ENCODE measurements at regions of chr2 and their contacts with region 1.

Region 1: DNA sequence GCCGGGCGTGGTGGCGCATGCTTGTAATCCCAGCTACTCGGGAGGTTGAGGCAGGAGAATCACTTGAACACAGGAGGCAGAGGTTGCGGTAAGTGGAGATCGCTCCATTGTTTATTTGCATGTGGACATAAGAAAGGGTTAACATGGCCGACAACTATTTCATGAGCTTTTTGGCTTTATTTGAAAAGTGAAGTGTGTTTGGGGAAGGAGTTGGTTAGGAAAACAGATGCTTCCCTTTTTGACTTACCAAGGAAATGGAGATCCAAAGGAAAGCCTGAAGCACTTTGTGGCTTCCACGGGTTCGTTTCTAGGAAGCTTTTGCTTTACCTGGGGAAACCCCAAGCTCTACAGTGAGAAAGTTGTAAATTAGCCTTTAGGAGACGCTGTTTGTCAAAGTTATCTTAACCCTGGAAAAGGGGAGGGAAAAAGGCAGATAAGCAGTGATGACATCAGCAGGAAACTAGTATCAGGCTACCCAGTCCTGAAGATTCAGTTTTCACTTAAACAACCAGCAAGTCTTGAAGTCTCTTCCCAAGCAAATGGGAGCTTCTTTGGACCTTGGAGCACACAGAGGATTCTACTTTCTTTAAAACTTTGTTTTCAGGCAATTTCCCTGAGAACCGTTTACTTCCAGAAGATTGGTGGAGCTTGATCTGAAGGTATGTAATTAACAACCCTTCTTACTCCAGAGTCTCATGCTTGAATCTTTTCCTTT is at the start of gene CASP10:
- DNase-seq: peak; percentile 41
- H3K4me3 ChIP-seq: peak within 1 kb of the TSS; percentile 22 to 58 (median 43)
- H3K27ac ChIP-seq: peak within 1 kb of the TSS; percentile 63 to 86 (median 82)
- H3K4me1 ChIP-seq: peaks cover 0 to 37% (median 6%) of the 10 kb centered on the region in 4 donors
- H3K27me3 ChIP-seq: no peaks in the 10 kb centered on the region
- CTCF ChIP-seq: peak; percentile 29 to 71 (median 34)
- EP300 ChIP-seq: no peak
- POLR2A ChIP-seq: peak; percentile 82
- total RNA-seq, gene CASP10: 4.8 to 68.4 (median 38.1) TPM

Region 2: DNA sequence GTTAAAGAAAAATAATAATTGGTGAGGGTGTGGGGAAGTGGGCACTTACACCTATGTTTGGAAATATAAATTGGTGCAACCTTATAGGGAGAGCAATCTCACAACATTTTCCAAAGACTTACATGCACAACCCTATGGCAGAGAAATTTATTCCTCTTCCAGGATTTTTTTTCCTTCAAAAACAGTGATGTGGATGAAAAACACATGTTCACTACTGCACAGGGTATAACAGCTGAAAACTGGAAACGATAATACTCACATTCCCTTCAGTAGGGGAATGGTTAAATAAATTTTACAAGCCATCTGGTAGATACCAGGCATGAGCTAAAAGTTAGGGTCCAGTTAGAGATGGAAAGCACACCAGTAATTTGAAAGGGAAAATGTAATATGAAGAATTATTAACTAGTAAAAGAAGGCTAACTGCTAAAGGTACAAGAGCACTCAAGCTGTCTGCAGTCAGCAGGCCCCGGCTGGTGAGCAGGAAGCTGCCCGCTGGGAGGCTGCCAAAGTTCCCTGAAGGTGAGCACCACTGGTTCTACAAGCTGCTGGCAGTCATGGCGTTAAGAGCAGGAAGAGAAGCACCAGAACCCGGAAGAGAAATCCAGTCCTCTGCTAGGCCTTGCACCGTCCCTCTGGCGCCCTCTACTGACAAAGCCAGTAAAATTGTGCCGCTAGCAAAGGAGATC is 49.1 kb after region 1 on chr2:
- in situ Hi-C with region 1: loop called in 1 of 4 experiments (anchors 10 kb)
- intact Hi-C with region 1: no loop called
- DNase-seq: peak; percentile 94
- H3K4me3 ChIP-seq: no peak overlapping the region
- H3K27ac ChIP-seq: peak overlapping the region; percentile 84 to 90 (median 86)
- H3K4me1 ChIP-seq: peaks cover 6 to 63% (median 38%) of the 10 kb centered on the region in 4 donors
- H3K27me3 ChIP-seq: no peaks in the 10 kb centered on the region
- CTCF ChIP-seq: peak; percentile 80 to 95 (median 91)
- EP300 ChIP-seq: no peak
- POLR2A ChIP-seq: no peak

Measured in transverse colon (tissue), 4 donors.